ENCODE measurements at regions of chr2 and their contacts with region 1.

Region 1: DNA sequence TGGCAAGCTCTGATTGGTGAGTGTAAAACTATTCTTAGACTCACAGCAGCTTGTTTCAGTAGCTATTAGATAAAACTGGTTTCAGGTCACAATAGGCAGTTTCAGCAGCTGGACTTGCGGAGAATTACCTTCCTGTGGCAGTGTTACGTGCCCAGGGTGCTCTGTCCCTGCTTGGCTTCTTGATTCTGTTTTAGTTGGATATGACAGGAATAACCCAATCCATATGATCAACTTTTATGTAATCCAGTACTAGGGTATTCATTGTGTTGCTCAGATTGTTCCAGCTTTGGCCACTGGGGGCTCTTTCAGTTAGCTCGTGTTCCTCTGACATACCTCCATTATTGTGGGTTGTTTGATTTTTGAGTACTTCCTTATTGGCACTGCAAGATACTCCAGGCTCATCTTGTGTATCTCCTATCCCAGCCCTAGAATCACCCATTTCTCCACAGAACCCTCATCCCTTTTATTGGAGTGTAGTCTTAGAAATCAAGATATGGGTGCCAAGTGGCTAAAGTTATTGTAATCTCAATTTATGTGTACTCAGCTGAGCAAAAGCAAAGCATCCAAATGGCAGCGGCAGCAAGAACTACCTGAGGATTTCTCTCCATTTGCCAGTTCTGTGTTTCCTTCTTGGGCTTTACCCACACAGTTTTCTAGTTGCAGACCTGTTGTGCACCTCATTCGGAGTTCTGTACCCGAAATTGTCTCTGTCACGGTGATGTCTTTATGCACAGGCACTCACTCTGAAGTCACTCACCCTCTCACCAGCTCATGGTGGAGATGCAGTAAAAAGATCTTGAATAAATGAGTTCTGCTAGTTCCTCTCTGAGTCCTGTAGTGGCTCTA is 43.4 kb downstream of the INPP4A start:
- DNase-seq: no peak
- H3K4me3 ChIP-seq: no peak overlapping the region
- H3K27ac ChIP-seq: no peak overlapping the region
- H3K4me1 ChIP-seq: peaks cover 6 to 18% (median 12%) of the 10 kb centered on the region in 4 experiments; a peak in 6 of 7 replicates
- H3K27me3 ChIP-seq: no peaks in the 10 kb centered on the region
- CTCF ChIP-seq: peak in 2 of 3 experiments; percentile 41 to 64; a peak in 3 of 4 replicates
- EP300 ChIP-seq: no peak
- POLR2A ChIP-seq: no peak
- RAD21 ChIP-seq: peak; percentile 4 to 46; a peak in 2 of 4 replicates

Region 2: GRCh38 chr2:98412751-98413458 is 75.1 kb before region 1 on chr2:
- CTCF ChIA-PET with region 1: interaction called, 12 read pairs
- POLR2A ChIA-PET with region 1: no interaction called
- DNase-seq: peak in 1 of 2 experiments; percentile 50
- H3K4me3 ChIP-seq: no peak overlapping the region; a peak in 1 of 8 replicates
- H3K27ac ChIP-seq: no peak overlapping the region
- H3K4me1 ChIP-seq: peaks cover 0 to 6% (median 1%) of the 10 kb centered on the region in 4 experiments; a peak in 1 of 7 replicates
- H3K27me3 ChIP-seq: no peaks in the 10 kb centered on the region
- CTCF ChIP-seq: peak in 2 of 3 experiments; percentile 53 to 63; a peak in 3 of 4 replicates
- EP300 ChIP-seq: no peak
- POLR2A ChIP-seq: no peak
- RAD21 ChIP-seq: peak; percentile 68 to 77

Region 3: DNA sequence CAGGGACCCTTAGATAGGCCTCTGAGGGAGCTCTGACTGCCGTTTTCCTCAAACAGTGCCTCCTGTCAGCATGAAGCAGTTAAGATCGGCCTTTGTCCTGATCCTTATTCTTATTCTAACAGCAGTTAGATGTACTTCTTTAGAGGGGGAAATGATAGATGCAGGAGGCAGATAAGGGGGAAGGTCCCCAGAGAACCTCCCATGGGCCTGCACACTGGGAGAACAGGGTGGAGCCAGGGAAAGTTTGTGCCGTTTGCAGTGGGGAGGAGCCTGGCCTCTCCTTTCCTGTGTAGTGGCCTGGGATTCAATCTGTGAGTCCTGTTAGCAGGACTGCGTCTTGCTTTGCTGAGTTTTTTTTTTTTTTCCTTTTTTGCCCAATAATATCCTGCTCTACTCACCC is 51.3 kb before region 1 on chr2:
- CTCF ChIA-PET with region 1: no interaction called
- POLR2A ChIA-PET with region 1: no interaction called
- DNase-seq: no peak
- H3K4me3 ChIP-seq: no peak overlapping the region
- H3K27ac ChIP-seq: peak overlapping the region; percentile 45; the same call in 1 of the 2 replicates
- H3K4me1 ChIP-seq: peaks cover 0 to 4% (median 3%) of the 10 kb centered on the region in 4 experiments; a peak in 3 of 7 replicates
- H3K27me3 ChIP-seq: no peaks in the 10 kb centered on the region
- CTCF ChIP-seq: peak in 1 of 3 experiments; percentile 22; a peak in 1 of 4 replicates
- EP300 ChIP-seq: no peak
- POLR2A ChIP-seq: no peak
- RAD21 ChIP-seq: no peak

Region 4: DNA sequence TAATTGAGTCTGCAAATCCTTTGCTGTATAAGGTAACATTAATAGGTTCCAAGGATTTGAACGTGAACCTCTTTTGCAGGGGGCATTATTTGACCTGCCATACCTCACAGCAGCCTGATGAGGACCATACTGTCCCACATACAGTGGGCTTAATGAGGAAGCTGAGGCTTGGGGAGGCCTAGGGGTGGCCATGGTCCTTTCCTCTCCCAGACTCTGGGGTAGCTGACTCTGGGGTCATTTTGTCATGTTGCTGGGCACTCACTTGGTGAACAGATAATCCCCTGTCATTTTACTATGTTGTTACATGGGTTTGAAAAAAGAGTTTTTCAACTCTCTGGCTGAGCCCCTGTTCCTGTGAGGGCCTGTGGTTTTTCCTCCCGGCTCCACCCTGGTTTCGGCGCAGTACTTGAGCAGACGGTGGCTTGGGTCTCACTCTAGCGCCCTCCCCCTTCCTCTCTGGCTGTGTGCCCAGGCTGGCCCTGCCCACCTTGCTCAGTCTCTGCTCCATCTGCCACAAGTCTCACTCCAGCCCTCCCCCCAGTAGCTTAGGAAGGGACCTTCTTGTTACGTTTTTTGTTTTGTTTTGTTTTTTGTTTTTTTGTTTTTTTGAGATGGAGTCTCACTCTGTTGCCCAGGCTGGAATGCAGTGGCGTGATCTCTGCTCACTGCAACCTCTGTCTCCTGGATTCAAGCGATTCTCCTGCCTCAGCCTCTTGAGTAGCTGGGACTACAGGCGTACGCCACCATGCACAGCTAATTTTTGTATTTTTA is 22.4 kb before region 1 on chr2:
- CTCF ChIA-PET with region 1: interaction called, 30 read pairs
- POLR2A ChIA-PET with region 1: no interaction called
- DNase-seq: no peak
- H3K4me3 ChIP-seq: no peak overlapping the region
- H3K27ac ChIP-seq: no peak overlapping the region
- H3K4me1 ChIP-seq: peaks cover 17 to 29% (median 19%) of the 10 kb centered on the region in 4 experiments
- H3K27me3 ChIP-seq: no peaks in the 10 kb centered on the region
- CTCF ChIP-seq: no peak
- EP300 ChIP-seq: no peak
- POLR2A ChIP-seq: no peak
- RAD21 ChIP-seq: no peak

Region 5: DNA sequence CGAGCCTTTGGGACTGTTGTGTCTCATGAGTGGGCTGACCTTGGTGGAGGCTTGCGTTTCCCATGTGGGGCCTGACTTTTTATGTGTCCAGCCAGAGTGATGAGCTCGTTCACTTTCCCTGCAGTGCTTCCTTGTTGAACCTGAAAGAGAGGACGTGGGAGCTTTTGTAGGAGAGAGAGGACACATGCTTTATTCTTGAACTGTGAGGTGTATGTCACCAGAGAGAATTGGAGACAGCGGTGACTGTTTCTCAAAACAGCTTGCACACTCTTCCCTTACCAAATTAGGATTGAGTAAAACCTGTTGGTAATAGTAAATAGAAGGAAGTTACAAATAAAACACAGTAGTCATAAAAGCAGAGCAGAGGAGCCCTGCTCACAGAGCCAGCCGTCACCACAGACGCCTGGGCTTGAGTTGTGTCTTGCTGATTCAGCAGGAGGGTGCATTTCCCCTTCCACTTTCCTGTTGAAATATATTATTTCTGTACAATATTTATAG is 17.3 kb after region 1 on chr2:
- CTCF ChIA-PET with region 1: interaction called, 18 read pairs
- POLR2A ChIA-PET with region 1: no interaction called
- DNase-seq: no peak
- H3K4me3 ChIP-seq: no peak overlapping the region
- H3K27ac ChIP-seq: no peak overlapping the region
- H3K4me1 ChIP-seq: peaks cover 0 to 4% (median 2%) of the 10 kb centered on the region in 4 experiments; a peak in 4 of 7 replicates
- H3K27me3 ChIP-seq: no peaks in the 10 kb centered on the region
- CTCF ChIP-seq: no peak
- EP300 ChIP-seq: no peak
- POLR2A ChIP-seq: no peak
- RAD21 ChIP-seq: no peak

Region 6: GRCh38 chr2:98541906-98542305 is 53.9 kb after region 1 on chr2:
- CTCF ChIA-PET with region 1: interaction called, 11 read pairs
- POLR2A ChIA-PET with region 1: no interaction called
- DNase-seq: no peak
- H3K4me3 ChIP-seq: no peak overlapping the region
- H3K27ac ChIP-seq: no peak overlapping the region
- H3K4me1 ChIP-seq: no peaks in the 10 kb centered on the region
- H3K27me3 ChIP-seq: no peaks in the 10 kb centered on the region
- CTCF ChIP-seq: no peak
- EP300 ChIP-seq: no peak
- POLR2A ChIP-seq: no peak
- RAD21 ChIP-seq: no peak